SK-N-SH (cell line): ENCODE measurements at regions of chr5 and their contacts with region 1.

Region 1: DNA sequence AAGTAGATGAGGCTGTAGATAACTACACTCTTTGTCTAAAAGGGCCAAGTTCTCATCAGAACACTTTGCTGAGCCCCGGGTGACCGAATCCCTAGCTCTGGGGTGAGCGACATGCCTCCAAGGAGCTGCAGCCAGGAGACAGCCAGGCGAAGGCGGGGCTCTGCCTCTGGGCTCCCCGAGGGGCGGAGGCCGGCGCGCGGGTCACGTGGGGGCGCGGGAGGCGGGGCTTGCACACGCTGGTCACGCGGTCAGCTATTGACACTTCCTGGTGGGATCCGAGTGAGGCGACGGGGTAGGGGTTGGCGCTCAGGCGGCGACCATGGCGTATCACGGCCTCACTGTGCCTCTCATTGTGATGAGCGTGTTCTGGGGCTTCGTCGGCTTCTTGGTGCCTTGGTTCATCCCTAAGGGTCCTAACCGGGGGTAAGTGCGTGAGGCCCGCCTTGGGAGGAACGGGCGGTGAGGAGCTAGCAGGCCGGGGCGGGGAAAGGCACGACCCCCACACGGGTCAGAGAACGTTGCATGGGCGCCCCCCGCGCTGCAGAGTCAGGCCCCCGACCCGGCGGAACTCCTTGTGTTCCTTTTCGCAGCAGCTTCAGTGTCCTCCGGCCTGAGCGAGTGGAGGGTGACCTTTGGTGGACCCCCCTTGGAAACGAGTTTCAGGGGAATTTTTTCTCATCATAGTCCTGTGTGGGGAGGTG is at the start of gene ATP6V0E1:
- DNase-seq: peak; percentile 98
- H3K4me3 ChIP-seq: peak within 1 kb of the TSS; percentile 76 to 92
- H3K27ac ChIP-seq: peak within 1 kb of the TSS; percentile 66 to 88
- H3K4me1 ChIP-seq: 0 out of 4 replicates have a peak, but pooled peaks cover 0 to 5% of the 10 kb centered on the region in 2 experiments
- H3K27me3 ChIP-seq: no peaks in the 10 kb centered on the region
- CTCF ChIP-seq: no peak
- EP300 ChIP-seq: no peak
- RAD21 ChIP-seq: no peak
- polyA plus RNA-seq, gene ATP6V0E1: 215 and 243 TPM in 2 replicates

Region 2: GRCh38 chr5:172958331-172959046 is 25.2 kb before region 1 on chr5:
- CTCF ChIA-PET with region 1: interaction called, 18 read pairs
- POLR2A ChIA-PET with region 1: interaction called, 3 read pairs
- DNase-seq: peak; percentile 95
- H3K4me3 ChIP-seq: peak overlapping the region; percentile 86 to 99
- H3K27ac ChIP-seq: peak overlapping the region in 1 of 2 experiments; percentile 97; a peak in 3 of 4 replicates
- H3K4me1 ChIP-seq: peaks cover 10 to 14% of the 10 kb centered on the region in 2 experiments; a peak in 2 of 4 replicates
- H3K27me3 ChIP-seq: no peaks in the 10 kb centered on the region
- CTCF ChIP-seq: no peak
- EP300 ChIP-seq: no peak
- RAD21 ChIP-seq: no peak

Region 3: DNA sequence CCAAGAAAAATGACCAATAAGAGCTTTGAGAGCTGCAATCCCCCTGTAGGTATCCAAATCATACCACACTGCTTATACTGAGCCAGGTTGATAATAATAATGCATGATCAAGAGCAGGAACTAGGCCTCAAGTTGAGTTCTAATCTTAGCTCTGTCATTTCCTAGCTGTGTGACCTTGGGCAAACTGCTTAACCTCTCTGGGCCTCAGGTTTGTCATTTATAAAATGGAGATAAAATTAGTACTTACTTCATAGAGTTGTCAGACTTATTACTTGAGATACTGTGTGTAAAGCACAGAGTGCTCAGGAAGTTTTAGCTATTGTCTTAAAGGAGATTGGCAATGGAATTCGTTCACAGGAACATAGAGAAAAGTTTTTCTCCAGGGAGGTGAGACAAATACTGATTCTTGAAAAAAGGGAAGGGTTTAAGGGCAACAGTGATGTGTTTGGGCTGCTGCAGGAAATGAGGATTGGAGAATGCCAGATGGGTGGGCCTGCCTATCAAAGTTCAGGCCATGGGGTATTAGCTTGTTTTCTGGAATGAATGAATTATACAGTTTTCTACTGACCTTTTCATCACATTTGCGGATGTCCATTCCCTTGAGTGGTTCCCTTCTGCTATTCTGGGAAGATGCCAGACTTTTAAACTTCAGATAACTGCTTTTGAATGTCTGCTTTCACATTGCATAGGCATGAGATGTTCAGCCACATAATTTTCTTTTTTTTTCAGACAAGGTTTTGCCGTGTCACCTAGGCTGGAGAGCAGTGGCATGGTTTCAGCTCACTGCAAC is 10.4 kb before region 1 on chr5:
- CTCF ChIA-PET with region 1: interaction called, 11 read pairs
- POLR2A ChIA-PET with region 1: no interaction called
- DNase-seq: no peak
- H3K4me3 ChIP-seq: no peak overlapping the region
- H3K27ac ChIP-seq: peak overlapping the region in 1 of 2 experiments; percentile 33; a peak in 2 of 4 replicates
- H3K4me1 ChIP-seq: no peaks in the 10 kb centered on the region
- H3K27me3 ChIP-seq: no peaks in the 10 kb centered on the region
- CTCF ChIP-seq: no peak
- EP300 ChIP-seq: no peak
- RAD21 ChIP-seq: no peak